Colonic mucosa (tissue), 4 donors: ENCODE measurements at regions of chr9 and their contacts with region 1.

Region 1: GRCh38 chr9:70924895-70925547 is 196.4 kb downstream of the TRPM3 start:
- DNase-seq: peak; percentile 27
- H3K4me3 ChIP-seq: no peak overlapping the region
- H3K27ac ChIP-seq: no peak overlapping the region
- H3K4me1 ChIP-seq: no peaks in the 10 kb centered on the region
- H3K27me3 ChIP-seq: no peaks in the 10 kb centered on the region
- CTCF ChIP-seq: peak; percentile 66

Region 2: GRCh38 chr9:71001780-71002386 is 76.9 kb after region 1 on chr9:
- intact Hi-C with region 1: loop called (anchors 5 kb)
- DNase-seq: peak; percentile 40
- H3K4me3 ChIP-seq: no peak overlapping the region
- H3K27ac ChIP-seq: no peak overlapping the region
- H3K4me1 ChIP-seq: no peaks in the 10 kb centered on the region
- H3K27me3 ChIP-seq: no peaks in the 10 kb centered on the region
- CTCF ChIP-seq: peak; percentile 42

Region 3: DNA sequence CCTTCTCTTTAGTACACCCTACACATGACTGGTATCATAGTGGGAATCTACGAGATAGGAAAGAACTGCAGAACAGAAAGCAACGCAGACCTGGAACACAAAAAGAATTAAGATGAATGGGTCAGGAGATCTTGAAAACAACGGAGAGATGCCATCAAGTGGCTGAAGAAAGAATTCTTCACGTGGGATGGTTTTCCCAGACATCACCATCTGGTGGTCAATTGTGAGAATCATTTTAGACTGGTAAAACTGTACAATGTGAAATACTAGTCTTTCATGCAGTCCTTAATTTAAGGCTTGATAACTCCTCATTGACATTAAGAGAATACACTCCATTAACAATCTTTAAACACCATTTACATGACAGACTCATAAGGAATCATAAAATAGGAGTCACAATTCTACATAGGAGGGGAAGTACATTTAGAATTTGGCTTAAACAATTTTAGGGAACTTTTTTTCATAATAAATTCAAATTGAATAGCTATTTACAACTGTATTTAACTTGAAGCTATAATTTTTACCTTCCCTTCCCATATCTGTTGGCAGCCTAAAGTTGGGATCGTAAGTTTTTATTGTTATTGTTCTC is 324.8 kb after region 1 on chr9:
- intact Hi-C with region 1: loop called (anchors 5 kb)
- DNase-seq: peak; percentile 19
- H3K4me3 ChIP-seq: no peak overlapping the region
- H3K27ac ChIP-seq: no peak overlapping the region
- H3K4me1 ChIP-seq: no peaks in the 10 kb centered on the region
- H3K27me3 ChIP-seq: no peaks in the 10 kb centered on the region
- CTCF ChIP-seq: peak; percentile 63